ENCODE measurements at regions of chr10 and their contacts with region 1.

Region 1: DNA sequence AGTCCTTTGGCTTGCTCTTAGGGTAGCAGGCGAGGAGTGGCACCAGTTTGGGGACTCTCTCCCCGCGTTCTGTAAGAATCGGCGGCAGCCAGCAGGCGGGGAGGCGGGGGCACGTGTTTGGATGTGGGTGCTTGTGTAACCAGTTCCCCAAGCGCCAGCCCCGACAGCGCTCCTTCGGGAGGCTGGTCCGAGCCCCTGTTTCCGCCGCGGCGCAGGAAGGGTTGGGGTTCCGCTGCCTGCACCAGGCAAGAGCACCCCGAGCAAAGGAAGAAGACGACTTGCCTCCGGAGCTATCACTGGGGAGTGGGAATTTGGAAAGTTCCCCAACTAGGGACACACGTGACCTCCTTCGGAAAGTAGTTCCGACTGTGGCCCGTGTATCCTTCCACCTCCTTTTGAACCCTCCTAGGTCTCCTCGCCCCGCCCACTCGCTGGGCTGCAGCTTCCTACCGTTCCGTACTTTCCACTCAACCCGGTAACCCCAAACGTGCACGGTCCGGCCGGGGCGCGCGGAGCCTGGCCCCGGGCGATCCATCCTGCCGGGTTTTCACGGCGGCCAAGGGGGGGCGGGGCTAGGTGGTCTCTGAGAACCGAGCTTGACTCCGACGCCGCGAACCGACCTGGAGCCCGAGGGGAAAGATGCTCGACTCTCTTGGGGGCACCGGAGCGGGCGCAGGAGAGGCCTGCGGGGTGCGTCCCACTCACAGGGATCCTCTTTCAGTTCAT is 1.2 kb downstream of the KLLN start:
- DNase-seq: peak; percentile 98
- H3K4me3 Mint-ChIP-seq: peak overlapping the region; percentile 92
- H3K27ac Mint-ChIP-seq: peak overlapping the region; percentile 91
- H3K4me1 Mint-ChIP-seq: peaks cover 38% of the 10 kb centered on the region
- H3K27me3 Mint-ChIP-seq: no peaks in the 10 kb centered on the region

Region 2: DNA sequence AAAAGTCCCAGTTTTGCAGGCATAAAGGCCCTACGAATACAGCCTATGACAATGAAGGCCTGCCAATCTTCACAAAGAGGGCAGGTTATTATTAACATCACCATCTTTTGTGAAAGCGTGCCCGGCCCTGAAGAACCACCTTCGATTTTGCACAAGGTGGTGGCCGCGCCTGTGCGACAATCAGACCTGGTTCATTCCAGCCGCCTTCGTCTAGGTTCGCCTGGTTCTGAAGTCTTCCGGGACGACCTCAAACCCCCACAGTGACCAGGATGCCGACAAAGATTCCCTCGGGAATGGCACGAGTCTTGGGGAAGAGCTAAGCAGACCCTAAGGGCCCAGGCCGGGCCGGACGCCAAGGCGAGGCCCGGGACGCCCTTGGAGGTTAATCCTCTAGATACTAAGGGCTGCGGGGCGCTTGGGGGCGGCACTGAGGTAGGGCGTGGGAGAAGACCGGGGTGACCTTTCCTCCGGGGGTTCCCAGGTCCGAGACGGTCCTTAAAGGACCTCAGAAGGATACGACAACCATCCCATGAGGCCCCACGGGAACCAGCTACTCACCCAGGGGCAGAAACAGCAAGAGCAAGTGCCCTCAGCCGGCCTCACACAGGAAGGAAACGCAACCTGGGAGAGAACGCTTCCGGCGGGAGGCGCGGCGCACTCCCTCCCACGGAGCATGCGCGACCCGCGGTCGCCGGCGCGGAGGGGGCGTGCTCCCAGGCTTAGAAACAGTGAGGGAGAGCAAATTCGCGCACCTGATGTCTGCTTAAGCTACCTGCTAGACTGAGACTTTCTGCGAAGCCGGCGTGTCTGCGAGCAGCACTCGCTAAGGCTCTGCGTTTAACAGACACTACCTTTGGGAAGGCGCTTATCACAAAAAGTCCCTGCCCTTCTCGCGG is 44.3 kb before region 1 on chr10 and contains the start of gene ATAD1:
- intact Hi-C with region 1: loop called (anchors 1 kb)
- DNase-seq: peak; percentile 97
- H3K4me3 Mint-ChIP-seq: peak within 1 kb of the TSS; percentile 90
- H3K27ac Mint-ChIP-seq: peak within 1 kb of the TSS; percentile 98
- H3K4me1 Mint-ChIP-seq: peaks cover 27% of the 10 kb centered on the region
- H3K27me3 Mint-ChIP-seq: peaks cover 2% of the 10 kb centered on the region
- total RNA-seq, gene ATAD1: 54.1 and 55.5 TPM in 2 replicates

Region 3: GRCh38 chr10:87918254-87918859 is 56.2 kb after region 1 on chr10:
- intact Hi-C with region 1: loop called (anchors 2 kb)
- DNase-seq: no peak
- H3K4me3 Mint-ChIP-seq: no peak overlapping the region
- H3K27ac Mint-ChIP-seq: peak overlapping the region; percentile 43
- H3K4me1 Mint-ChIP-seq: peaks cover 35% of the 10 kb centered on the region
- H3K27me3 Mint-ChIP-seq: no peaks in the 10 kb centered on the region

Region 4: GRCh38 chr10:88091490-88092105 is 229.5 kb after region 1 on chr10:
- intact Hi-C with region 1: loop called (anchors 1 kb)
- DNase-seq: peak; percentile 92
- H3K4me3 Mint-ChIP-seq: no peak overlapping the region
- H3K27ac Mint-ChIP-seq: peak overlapping the region; percentile 56
- H3K4me1 Mint-ChIP-seq: peaks cover 30% of the 10 kb centered on the region
- H3K27me3 Mint-ChIP-seq: peaks cover 46% of the 10 kb centered on the region

Region 5: GRCh38 chr10:88150339-88150738 is 288.2 kb after region 1 on chr10:
- intact Hi-C with region 1: no loop called
- DNase-seq: no peak
- H3K4me3 Mint-ChIP-seq: no peak overlapping the region
- H3K27ac Mint-ChIP-seq: no peak overlapping the region
- H3K4me1 Mint-ChIP-seq: peaks cover 20% of the 10 kb centered on the region
- H3K27me3 Mint-ChIP-seq: peaks cover 7% of the 10 kb centered on the region

Region 6: GRCh38 chr10:88389456-88389855 is 527.3 kb after region 1 on chr10:
- intact Hi-C with region 1: loop called (anchors 1 kb)
- DNase-seq: peak; percentile 82
- H3K4me3 Mint-ChIP-seq: no peak overlapping the region
- H3K27ac Mint-ChIP-seq: no peak overlapping the region
- H3K4me1 Mint-ChIP-seq: peaks cover 31% of the 10 kb centered on the region
- H3K27me3 Mint-ChIP-seq: no peaks in the 10 kb centered on the region

Region 7: DNA sequence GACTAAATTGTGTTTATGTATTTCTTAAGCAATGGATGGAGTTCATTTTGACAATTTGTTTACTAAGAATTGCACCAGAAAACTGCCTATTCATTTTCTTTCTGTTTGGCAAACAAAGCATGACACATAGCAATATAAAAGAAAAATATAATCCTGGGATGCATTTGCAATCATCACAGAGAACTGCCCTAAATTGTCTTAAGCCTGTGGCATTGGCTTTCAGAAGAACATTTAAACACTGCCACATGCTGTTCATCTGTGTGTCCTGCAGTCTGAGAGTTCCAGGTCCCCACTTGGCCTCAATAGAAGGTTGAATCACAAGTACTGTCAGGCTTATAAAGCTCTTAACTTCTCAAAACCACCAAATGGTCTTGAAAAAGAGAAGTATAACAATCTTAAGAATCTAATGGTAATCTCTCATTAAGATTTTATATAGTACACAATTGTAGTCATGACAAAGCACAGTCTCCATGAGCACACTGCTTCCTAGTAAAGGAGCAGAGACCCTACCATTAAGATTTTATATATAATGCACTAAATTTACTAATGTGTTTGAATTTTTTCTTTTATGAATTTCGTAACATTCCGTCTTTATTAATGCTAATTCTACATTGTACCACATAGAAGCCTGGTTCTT is 691.1 kb after region 1 on chr10:
- intact Hi-C with region 1: loop called (anchors 1 kb)
- DNase-seq: peak; percentile 83
- H3K4me3 Mint-ChIP-seq: no peak overlapping the region
- H3K27ac Mint-ChIP-seq: no peak overlapping the region
- H3K4me1 Mint-ChIP-seq: peaks cover 3% of the 10 kb centered on the region
- H3K27me3 Mint-ChIP-seq: peaks cover 9% of the 10 kb centered on the region

Measured in activated CD4-positive, alpha-beta T cell treated with anti-CD3 and anti-CD28 coated beads, Interleukin-2, amount 10 ng/mL, durations not matched to agents 24 days and 14 days (primary cell).